Caco-2 (cell line): ENCODE measurements at regions of chr7 and their contacts with region 1.

Region 1: GRCh38 chr7:112414855-112415490 is 35.3 kb upstream of the IFRD1 start:
- DNase-seq: peak in 1 of 2 experiments; percentile 37
- H3K4me3 ChIP-seq: no peak overlapping the region
- H3K4me3 Mint-ChIP-seq: no peak overlapping the region
- H3K27ac Mint-ChIP-seq: no peak overlapping the region
- H3K4me1 ChIP-seq: no peaks in the 10 kb centered on the region
- H3K4me1 Mint-ChIP-seq: no peaks in the 10 kb centered on the region
- H3K27me3 ChIP-seq: no peaks in the 10 kb centered on the region
- H3K27me3 Mint-ChIP-seq: peaks cover 11% of the 10 kb centered on the region
- CTCF ChIP-seq: peak; percentile 68 to 70

Region 2: DNA sequence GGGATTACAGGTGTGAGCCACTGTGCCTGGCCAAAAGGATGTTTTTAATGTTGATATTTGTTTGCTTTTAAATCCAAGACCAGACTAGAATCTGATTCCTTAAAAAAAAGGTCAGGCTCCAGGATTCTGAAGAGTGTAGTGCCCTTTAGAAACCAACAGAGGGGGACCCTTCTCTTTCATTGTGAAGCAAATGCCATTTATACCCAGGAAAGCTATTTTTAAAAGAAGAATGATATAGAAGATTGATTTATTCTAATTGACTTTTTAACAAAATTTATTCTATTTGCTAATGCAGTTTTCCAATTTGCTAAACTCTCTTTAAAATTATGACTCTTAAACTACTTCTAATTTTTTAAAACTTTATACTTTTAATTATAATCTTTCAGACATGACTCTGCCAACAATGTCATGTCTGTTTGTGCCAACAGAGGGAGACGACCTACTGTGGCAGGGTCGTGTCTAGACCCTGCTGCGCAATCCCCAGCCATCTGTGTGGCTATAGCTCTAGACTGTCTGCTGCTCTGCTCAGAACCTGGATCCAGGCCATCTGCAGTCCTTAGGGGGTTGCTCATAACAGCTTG is 651.7 kb before region 1 on chr7:
- CTCF ChIA-PET with region 1: interaction called, 3 read pairs
- POLR2A ChIA-PET with region 1: no interaction called
- intact Hi-C with region 1: loop called (anchors 1 kb)
- DNase-seq: peak in 1 of 2 experiments; percentile 32
- H3K4me3 ChIP-seq: no peak overlapping the region
- H3K4me3 Mint-ChIP-seq: no peak overlapping the region
- H3K27ac Mint-ChIP-seq: no peak overlapping the region
- H3K4me1 ChIP-seq: peaks cover under 1% of the 10 kb centered on the region; the same call in 1 of the 2 replicates
- H3K4me1 Mint-ChIP-seq: no peaks in the 10 kb centered on the region
- H3K27me3 ChIP-seq: no peaks in the 10 kb centered on the region
- H3K27me3 Mint-ChIP-seq: no peaks in the 10 kb centered on the region
- CTCF ChIP-seq: peak; percentile 57 to 72

Region 3: DNA sequence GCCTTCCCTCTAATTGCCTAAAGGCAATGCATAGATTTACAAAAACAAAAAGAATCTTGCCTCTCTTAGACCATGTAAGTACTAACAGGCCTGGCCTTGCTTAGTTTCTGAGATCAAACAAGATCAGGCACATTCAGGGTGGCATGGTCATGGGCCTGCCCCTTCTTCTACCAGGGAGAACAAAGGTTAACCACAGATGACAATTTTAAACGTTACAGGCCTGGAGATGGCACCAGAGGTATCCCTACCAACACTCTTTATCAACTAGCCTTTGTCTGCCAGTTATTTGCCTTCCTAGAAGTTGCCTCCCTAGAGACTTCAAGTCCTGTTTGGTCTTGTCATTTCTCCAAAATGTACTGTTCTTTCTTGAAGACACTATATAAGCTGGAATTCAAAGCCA is 461.4 kb before region 1 on chr7:
- CTCF ChIA-PET with region 1: no interaction called
- POLR2A ChIA-PET with region 1: no interaction called
- intact Hi-C with region 1: loop called (anchors 1 kb)
- DNase-seq: peak in 1 of 2 experiments; percentile 3
- H3K4me3 ChIP-seq: no peak overlapping the region
- H3K4me3 Mint-ChIP-seq: no peak overlapping the region
- H3K27ac Mint-ChIP-seq: no peak overlapping the region
- H3K4me1 ChIP-seq: no peaks in the 10 kb centered on the region
- H3K4me1 Mint-ChIP-seq: no peaks in the 10 kb centered on the region
- H3K27me3 ChIP-seq: no peaks in the 10 kb centered on the region
- H3K27me3 Mint-ChIP-seq: no peaks in the 10 kb centered on the region
- CTCF ChIP-seq: no peak

Region 4: GRCh38 chr7:112206238-112207044 is 208.5 kb before region 1 on chr7 and contains the starts of genes DOCK4 and ZNF277:
- CTCF ChIA-PET with region 1: no interaction called
- POLR2A ChIA-PET with region 1: no interaction called
- intact Hi-C with region 1: loop called (anchors 2 kb)
- DNase-seq: peak; percentile 98
- H3K4me3 ChIP-seq: peak within 1 kb of the TSS; percentile 91
- H3K4me3 Mint-ChIP-seq: peak within 1 kb of the TSS; percentile 97
- H3K27ac Mint-ChIP-seq: peak within 1 kb of the TSS; percentile 93
- H3K4me1 ChIP-seq: peaks cover 9% of the 10 kb centered on the region
- H3K4me1 Mint-ChIP-seq: peaks cover 16% of the 10 kb centered on the region
- H3K27me3 ChIP-seq: no peaks in the 10 kb centered on the region
- H3K27me3 Mint-ChIP-seq: peaks cover 11% of the 10 kb centered on the region
- CTCF ChIP-seq: no peak
- total RNA-seq, gene DOCK4: 2.0 and 2.7 TPM in 2 replicates
- total RNA-seq, gene ZNF277: 22.8 and 23.2 TPM in 2 replicates